Heart right ventricle (tissue), 16 donors: ENCODE measurements at regions of chr4 and their contacts with region 1.

Region 1: DNA sequence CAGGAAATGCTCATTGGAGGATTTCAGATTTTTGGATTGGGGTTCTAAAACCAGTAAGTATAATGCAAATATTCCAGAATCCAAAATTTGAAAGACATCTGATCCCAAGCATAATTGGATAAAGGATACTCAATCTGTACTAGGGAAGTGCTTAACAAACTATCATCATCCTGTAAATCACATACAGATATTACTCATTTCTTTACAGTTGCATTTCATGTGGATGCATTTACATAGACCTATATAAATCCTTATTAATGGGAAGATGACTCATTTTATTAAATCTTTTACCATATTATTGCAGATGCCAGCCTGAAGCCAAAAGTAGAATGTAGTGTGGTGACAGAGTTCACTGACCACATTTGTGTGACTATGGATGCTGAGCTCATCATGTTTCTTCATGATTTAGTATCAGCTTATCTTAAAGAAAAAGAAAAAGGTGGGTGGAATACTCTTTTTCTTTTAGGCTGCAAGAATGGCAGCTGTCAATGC is 22.4 kb upstream of the ADAD1 start:
- DNase-seq: no peak
- ATAC-seq: no peak
- H3K4me3 ChIP-seq: no peak overlapping the region
- H3K27ac ChIP-seq: no peak overlapping the region
- H3K4me1 ChIP-seq: no peaks in the 10 kb centered on the region
- H3K27me3 ChIP-seq: no peaks in the 10 kb centered on the region
- CTCF ChIP-seq: no peak

Region 2: GRCh38 chr4:121353213-121353612 is 1003.1 kb before region 1 on chr4:
- intact Hi-C with region 1: loop called in 1 of 10 experiments (anchors 5 kb)
- DNase-seq: no peak
- ATAC-seq: no peak
- H3K4me3 ChIP-seq: no peak overlapping the region
- H3K27ac ChIP-seq: no peak overlapping the region
- H3K4me1 ChIP-seq: no peaks in the 10 kb centered on the region
- H3K27me3 ChIP-seq: no peaks in the 10 kb centered on the region
- CTCF ChIP-seq: no peak

Region 3: DNA sequence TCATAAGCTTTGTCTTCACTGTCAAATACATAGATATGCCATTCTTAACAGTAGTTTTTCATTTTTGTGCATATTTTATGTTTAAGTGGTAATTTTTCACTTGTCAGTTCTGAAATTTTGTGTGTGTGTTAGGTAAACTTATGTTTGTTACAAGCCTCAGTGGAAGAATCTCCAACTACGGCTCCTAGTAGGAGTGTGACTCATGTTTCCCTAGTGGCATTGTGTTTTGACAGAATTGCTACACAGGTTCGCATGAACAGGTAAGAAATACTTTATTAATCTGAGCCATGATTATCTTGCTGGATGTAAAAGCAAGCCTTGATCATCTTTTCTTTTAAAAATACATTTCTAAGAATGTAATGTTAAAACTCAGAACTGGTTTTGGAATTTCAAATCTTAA is 109.8 kb before region 1 on chr4:
- intact Hi-C with region 1: no loop called
- DNase-seq: no peak
- ATAC-seq: no peak
- H3K4me3 ChIP-seq: no peak overlapping the region
- H3K27ac ChIP-seq: no peak overlapping the region
- H3K4me1 ChIP-seq: no peaks in the 10 kb centered on the region
- H3K27me3 ChIP-seq: no peaks in the 10 kb centered on the region
- CTCF ChIP-seq: no peak

Region 4: GRCh38 chr4:122309988-122310626 is 46.3 kb before region 1 on chr4:
- intact Hi-C with region 1: loop called in 1 of 10 experiments (anchors 2 kb)
- DNase-seq: no peak
- ATAC-seq: no peak
- H3K4me3 ChIP-seq: no peak overlapping the region
- H3K27ac ChIP-seq: no peak overlapping the region
- H3K4me1 ChIP-seq: peaks cover 0 to 8% (median 0%) of the 10 kb centered on the region in 9 donors
- H3K27me3 ChIP-seq: no peaks in the 10 kb centered on the region
- CTCF ChIP-seq: peak in 8 of 9 donors; percentile 15 to 57 (median 46)